ENCODE measurements at regions of chr19 and their contacts with region 1.

Region 1: GRCh38 chr19:39125554-39126311 is at the start of gene PAK4:
- DNase-seq: peak; percentile 95
- H3K4me3 Mint-ChIP-seq: peak within 1 kb of the TSS; percentile 90
- H3K27ac Mint-ChIP-seq: peak within 1 kb of the TSS; percentile 91
- H3K4me1 Mint-ChIP-seq: peaks cover 28% of the 10 kb centered on the region
- H3K27me3 Mint-ChIP-seq: peaks cover 3% of the 10 kb centered on the region
- total RNA-seq, gene PAK4: 16.5 and 19.4 TPM in 2 replicates

Region 2: DNA sequence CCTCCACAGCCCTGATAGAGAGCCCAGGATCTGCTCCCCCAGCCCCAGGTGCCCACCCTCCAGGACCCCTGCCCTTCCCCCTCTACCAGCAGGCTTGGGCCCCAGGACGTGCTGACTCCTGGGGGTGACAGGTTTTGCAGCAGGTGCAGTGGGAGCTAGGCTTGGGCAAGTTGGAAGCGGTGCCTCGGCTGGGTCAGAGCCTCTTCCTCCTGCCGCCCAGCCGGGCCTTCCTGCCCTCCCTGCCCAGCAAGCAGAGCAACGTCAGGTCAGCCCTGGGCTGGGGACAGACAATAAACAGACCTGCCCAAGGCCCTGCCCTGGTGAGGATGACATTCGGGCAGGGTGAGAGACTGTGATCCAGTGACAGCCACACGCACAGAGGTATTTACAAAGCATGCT is 61.8 kb after region 1 on chr19:
- intact Hi-C with region 1: loop called (anchors 1 kb)
- DNase-seq: no peak
- H3K4me3 Mint-ChIP-seq: no peak overlapping the region
- H3K27ac Mint-ChIP-seq: no peak overlapping the region
- H3K4me1 Mint-ChIP-seq: no peaks in the 10 kb centered on the region
- H3K27me3 Mint-ChIP-seq: peaks cover 8% of the 10 kb centered on the region

Region 3: GRCh38 chr19:39328046-39328705 is 202.4 kb after region 1 on chr19:
- intact Hi-C with region 1: loop called (anchors 1 kb)
- DNase-seq: peak; percentile 64
- H3K4me3 Mint-ChIP-seq: no peak overlapping the region
- H3K27ac Mint-ChIP-seq: peak overlapping the region; percentile 65
- H3K4me1 Mint-ChIP-seq: peaks cover 21% of the 10 kb centered on the region
- H3K27me3 Mint-ChIP-seq: no peaks in the 10 kb centered on the region

Measured in activated T-helper 2 cell treated with anti-CD3 and anti-CD28 coated beads, Interferon-gamma antibody, Interleukin-2, Interleukin-4, amounts not matched to agents 10 μg/mL and 5 μg/mL and 100 μg/mL, durations not matched to agents 14 hours and 24 hours and 36 hours (primary cell).